GM10248 (cell line): ENCODE measurements at regions of chr12 and their contacts with region 1.

Region 1: DNA sequence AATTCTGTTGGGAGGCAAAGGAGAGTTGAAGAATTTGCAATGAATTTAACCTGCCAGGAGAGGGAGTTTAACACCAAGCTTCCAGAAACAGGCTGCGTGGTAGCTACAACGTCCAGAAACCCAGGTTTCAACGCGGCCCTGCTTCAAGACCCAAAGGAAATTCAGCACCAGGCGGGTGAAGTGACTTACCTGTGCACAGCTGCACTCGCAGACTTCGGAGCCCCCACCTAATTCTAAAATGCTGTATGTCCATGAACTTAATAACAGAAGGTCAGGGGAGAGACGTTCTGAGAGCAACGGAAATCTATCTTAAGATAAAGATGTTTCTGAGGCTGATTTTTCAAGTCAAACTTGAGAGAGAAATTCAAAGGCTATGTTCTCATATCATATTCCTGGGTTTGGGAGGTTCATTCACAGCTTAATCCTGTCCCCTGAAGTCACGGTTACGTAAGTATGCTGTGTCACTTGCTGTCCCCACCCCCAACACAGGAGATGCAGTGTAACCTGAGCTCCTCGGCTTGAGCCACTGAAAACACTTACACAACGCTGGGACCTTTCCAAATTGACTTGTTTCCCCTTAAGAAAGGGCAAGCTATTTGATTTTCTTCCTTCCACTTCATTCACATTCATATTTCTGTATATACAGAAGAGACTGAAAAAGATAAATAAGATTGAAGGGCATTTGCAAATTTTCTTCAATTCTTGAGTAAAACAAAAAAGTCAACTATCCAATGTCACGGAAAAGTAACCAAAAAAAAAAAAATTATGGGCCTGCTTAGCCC is 22.7 kb downstream of the CLIP1 start:
- DNase-seq: peak; percentile 77
- CTCF ChIP-seq: peak; percentile 60

Region 2: GRCh38 chr12:122265931-122266771 is 133.6 kb before region 1 on chr12 and contains the start of gene VPS33A:
- CTCF ChIA-PET with region 1: no interaction called
- POLR2A ChIA-PET with region 1: no interaction called
- DNase-seq: peak; percentile 96
- CTCF ChIP-seq: no peak

Region 3: GRCh38 chr12:122389697-122390096 is 10.1 kb before region 1 on chr12:
- CTCF ChIA-PET with region 1: interaction called, 23 read pairs
- POLR2A ChIA-PET with region 1: interaction called, 5 read pairs
- DNase-seq: no peak
- CTCF ChIP-seq: no peak

Region 4: GRCh38 chr12:122421821-122422729 is 22.3 kb after region 1 on chr12 and contains the start of gene CLIP1:
- CTCF ChIA-PET with region 1: interaction called, 97 read pairs
- POLR2A ChIA-PET with region 1: interaction called, 5 read pairs
- DNase-seq: peak; percentile 74
- CTCF ChIP-seq: peak; percentile 72

Region 5: GRCh38 chr12:122449353-122449752 is 49.6 kb after region 1 on chr12:
- CTCF ChIA-PET with region 1: interaction called, 14 read pairs
- POLR2A ChIA-PET with region 1: no interaction called
- DNase-seq: no peak
- CTCF ChIP-seq: no peak

Region 6: DNA sequence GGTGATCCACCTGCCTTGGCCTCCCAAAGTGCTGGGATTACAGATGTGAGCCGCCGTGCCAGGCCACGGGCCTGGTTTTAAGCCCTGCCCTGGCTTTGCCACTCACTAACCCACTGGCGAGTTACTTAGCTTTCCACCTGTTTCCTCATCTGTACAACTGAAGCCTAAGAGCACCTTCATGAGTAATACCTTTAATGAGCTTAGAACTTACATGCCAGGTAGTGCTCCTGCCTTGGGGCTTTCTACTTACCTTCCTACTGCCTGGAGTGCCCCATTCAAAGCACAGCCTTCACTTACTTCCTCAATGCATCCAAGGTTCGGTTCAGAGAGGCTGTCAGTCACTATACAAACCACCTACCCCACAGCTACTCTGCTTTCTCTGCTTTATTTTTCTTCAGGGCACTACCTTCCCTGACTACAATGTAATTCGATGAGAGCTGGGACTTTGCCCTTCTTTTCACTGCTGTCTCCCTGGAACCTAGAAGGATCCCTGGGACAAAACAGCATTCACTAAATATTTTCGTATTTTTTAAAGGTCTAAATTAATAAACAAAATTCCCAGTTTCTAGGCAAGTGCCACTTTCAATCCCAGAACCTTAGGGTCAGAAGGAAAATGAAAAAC is 87.1 kb after region 1 on chr12:
- CTCF ChIA-PET with region 1: interaction called, 11 read pairs
- POLR2A ChIA-PET with region 1: interaction called, 7 read pairs
- DNase-seq: no peak
- CTCF ChIP-seq: no peak

Region 7: DNA sequence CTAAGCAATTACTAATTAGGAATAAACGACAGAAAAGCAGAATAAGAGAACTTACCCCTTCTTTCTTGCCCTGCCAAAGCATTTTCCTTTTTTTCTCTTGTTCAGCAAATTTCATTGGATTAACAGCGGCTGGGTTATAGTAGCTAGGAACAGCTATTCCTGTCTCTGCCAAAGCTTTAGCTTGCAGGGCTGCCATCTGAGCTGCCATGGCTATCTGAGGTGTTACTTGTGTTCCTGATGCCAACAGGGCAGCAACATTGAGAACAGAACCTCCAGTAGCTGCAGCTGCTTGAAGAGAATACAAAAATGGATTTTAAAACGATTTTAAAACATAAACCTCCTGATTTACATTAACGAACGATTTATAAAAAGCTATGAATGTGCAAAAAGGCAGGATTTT is 108.4 kb after region 1 on chr12:
- CTCF ChIA-PET with region 1: interaction called, 4 read pairs
- POLR2A ChIA-PET with region 1: interaction called, 12 read pairs
- DNase-seq: no peak
- CTCF ChIP-seq: no peak

Region 8: DNA sequence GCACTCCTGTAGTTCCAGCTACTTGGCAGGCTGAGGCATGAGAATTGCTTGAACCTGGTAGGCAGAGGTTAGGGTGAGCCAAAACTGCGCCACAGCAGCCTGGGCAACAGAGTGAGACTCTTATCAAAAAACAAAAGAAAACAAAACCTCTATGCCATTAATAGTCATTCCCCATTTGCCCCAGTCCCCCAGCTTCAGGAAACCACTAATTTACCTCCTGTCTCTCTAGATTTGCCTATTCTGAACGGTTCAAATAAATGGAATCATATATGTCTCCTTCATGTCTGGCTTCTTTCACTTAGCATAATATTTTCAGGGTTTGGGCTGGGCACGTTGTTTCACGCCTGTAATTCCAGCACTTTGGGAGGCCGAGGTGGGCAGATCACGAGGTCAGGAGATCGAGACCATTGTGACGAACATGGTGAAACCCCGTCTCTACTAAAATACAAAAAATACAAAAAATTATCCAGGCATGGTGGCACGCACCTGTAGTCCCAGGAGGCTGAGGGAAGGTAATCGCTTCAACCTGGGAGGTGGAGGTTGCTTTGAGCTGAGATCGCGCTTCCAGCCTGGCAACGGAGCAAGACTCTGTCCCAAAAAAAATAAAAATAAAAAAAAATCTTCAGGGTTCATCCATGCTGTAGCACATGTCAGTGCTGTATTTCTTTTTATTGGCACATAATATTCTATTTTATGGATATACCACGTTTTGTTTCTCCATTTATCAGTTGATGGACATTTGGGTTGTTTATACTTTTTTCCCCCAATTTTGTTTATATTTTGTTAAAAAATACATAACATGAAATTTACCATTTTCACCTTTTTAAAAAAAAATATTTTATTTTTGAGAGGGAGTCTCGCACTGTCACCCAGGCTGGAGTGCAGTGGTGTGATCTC is 159.2 kb after region 1 on chr12:
- CTCF ChIA-PET with region 1: no interaction called
- POLR2A ChIA-PET with region 1: no interaction called
- DNase-seq: no peak
- CTCF ChIP-seq: no peak

Region 9: GRCh38 chr12:122642009-122642408 is 242.2 kb after region 1 on chr12:
- CTCF ChIA-PET with region 1: no interaction called
- POLR2A ChIA-PET with region 1: no interaction called
- DNase-seq: no peak
- CTCF ChIP-seq: no peak